ENCODE measurements at regions of chr21 and their contacts with region 1.

Region 1: DNA sequence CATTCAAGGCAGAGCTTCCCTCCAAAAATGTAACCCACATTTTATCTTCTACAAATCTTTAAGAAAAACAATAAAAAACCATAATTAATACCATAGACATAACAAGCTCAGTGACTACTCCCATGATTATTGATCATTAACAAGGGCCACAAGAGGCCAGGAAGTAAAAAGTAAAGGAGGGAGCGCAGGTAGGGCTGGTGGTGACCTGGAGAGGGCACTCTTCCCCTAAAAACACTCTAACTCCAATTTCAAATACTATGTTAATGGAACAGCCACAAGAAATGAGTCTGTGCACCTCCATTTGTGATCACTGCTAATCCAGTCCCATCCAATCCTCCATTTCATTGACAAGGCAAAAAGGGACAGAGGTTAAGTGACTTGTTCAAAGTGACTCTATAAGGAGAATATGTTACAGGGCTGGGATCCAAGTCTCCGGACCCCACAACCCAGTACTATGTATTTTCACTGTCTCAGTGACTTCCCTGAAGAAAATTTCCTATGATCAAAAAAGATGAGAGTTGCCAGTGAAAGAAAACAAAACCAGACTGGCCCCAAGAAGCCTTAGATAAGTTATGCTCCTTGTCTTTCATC is 41.2 kb upstream of the CFAP298 start:
- DNase-seq: no peak
- H3K4me3 Mint-ChIP-seq: no peak overlapping the region
- H3K27ac Mint-ChIP-seq: peak overlapping the region; percentile 5
- H3K4me1 Mint-ChIP-seq: peaks cover 9% of the 10 kb centered on the region
- H3K27me3 Mint-ChIP-seq: no peaks in the 10 kb centered on the region

Region 2: DNA sequence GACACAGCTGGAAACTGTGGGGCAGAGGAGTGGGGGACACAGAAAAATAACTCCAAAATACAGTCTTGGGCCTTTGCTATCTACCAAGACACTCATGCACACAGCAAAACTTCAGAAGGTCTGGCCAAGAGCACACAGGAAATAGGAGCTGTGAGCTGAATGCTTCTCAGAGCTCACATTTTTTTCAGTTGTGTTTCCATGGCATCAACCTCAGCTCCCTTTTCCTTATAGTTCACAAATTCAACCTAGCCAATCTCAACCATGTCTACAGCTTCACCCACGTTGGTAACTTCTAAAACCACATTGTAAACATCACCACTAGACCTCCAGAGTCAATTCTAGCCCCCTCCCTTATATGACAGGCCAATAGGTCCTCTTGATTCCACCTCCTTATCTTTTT is 94.0 kb after region 1 on chr21:
- intact Hi-C with region 1: loop called (anchors 1 kb)
- DNase-seq: no peak
- H3K4me3 Mint-ChIP-seq: no peak overlapping the region
- H3K27ac Mint-ChIP-seq: peak overlapping the region; percentile 6
- H3K4me1 Mint-ChIP-seq: peaks cover 43% of the 10 kb centered on the region
- H3K27me3 Mint-ChIP-seq: no peaks in the 10 kb centered on the region

Region 3: GRCh38 chr21:33127154-33127893 is 473.9 kb after region 1 on chr21:
- intact Hi-C with region 1: loop called (anchors 5 kb)
- DNase-seq: peak; percentile 8
- H3K4me3 Mint-ChIP-seq: no peak overlapping the region
- H3K27ac Mint-ChIP-seq: no peak overlapping the region
- H3K4me1 Mint-ChIP-seq: peaks cover 8% of the 10 kb centered on the region
- H3K27me3 Mint-ChIP-seq: peaks cover 16% of the 10 kb centered on the region